ENCODE measurements at regions of chr1 and their contacts with region 1.

Region 1: DNA sequence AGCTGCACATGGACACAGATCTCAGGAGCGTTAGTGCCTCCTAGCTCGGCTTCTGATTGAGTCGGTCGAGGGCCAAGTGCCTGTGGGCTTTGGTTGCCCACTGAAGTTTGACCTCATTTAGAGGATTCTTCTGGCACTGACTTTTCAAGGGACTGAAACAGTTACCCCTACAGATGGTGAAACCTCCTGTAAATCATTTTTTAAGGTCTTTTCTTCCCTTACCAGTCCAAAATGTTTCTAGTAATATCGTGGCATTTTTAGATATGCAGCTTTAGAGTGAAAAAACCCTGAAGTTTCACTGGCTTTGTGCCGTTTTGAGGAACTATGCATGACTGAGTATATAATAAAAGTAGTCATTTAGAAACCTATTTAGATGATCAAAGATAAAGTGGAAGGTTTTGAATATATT is 34.7 kb upstream of the L1TD1 start:
- DNase-seq: no peak
- H3K4me3 ChIP-seq: no peak overlapping the region
- H3K27ac ChIP-seq: no peak overlapping the region
- H3K4me1 ChIP-seq: no peaks in the 10 kb centered on the region
- H3K27me3 ChIP-seq: no peaks in the 10 kb centered on the region
- CTCF ChIP-seq: no peak
- EP300 ChIP-seq: no peak
- POLR2A ChIP-seq: no peak

Region 2: DNA sequence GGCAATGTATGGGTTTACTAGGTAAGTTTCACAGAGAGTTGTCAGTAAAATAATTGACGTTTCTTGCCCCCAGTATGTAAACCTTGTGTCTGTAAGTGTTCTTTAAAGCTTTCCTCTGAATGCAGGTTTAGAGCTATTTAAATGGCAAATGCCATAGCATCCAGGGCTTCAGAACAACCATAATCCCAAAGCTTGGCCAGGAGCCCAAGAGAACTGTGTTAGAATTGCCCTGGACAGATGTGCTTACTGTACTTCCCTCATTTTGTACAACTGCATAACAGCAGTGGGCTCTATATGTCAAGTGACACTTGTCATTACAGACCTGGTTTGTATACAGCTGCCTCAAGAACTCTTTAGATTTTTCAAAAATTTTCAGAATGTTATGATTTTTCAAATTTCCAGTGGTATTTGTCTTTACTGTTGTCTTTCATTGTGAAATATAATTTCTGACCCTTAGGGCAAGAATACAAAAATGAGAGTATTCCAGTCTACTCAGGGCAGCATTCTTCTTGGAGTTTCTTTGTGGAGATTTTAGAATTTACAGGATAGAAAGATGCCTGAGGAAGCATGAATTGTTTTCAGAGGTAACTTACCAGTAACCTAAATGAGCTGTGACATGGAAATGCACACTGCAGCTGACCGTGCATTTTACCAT is 102.2 kb before region 1 on chr1:
- intact Hi-C with region 1: no loop called
- DNase-seq: no peak
- H3K4me3 ChIP-seq: no peak overlapping the region
- H3K27ac ChIP-seq: no peak overlapping the region
- H3K4me1 ChIP-seq: no peaks in the 10 kb centered on the region
- H3K27me3 ChIP-seq: no peaks in the 10 kb centered on the region
- CTCF ChIP-seq: no peak
- EP300 ChIP-seq: no peak
- POLR2A ChIP-seq: no peak

Region 3: DNA sequence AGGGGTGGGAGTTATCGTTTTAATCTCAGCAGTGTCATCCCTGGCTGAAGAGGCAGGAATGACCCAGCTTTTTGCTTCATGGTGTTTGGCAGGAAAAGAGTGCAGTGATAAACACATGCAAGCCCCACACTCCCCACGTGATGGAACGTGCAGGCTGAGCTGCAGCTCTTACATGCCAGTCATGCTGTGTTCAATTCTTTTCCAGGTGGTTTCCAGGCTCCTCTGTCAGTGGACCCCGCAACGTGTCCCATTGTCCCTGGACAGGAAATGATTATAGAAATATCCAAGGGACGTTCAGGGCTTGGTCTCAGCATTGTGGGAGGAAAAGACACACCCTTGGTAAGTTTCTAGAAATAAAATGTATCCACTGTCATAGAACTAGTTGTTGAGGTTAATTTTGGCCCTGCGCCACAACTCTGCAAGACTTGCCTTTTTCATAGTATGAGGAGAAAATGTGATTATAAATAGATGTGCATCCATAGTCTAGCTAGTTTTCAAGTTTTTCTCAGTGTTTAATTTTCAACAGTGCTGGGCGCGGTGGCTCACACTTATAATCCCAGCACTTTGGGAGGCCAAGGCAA is 75.5 kb before region 1 on chr1:
- intact Hi-C with region 1: no loop called
- DNase-seq: peak in 1 of 2 donors; percentile 47
- H3K4me3 ChIP-seq: no peak overlapping the region
- H3K27ac ChIP-seq: no peak overlapping the region
- H3K4me1 ChIP-seq: peaks cover 0 to 4% (median 0%) of the 10 kb centered on the region in 4 donors
- H3K27me3 ChIP-seq: no peaks in the 10 kb centered on the region
- CTCF ChIP-seq: no peak
- EP300 ChIP-seq: no peak
- POLR2A ChIP-seq: no peak

Region 4: DNA sequence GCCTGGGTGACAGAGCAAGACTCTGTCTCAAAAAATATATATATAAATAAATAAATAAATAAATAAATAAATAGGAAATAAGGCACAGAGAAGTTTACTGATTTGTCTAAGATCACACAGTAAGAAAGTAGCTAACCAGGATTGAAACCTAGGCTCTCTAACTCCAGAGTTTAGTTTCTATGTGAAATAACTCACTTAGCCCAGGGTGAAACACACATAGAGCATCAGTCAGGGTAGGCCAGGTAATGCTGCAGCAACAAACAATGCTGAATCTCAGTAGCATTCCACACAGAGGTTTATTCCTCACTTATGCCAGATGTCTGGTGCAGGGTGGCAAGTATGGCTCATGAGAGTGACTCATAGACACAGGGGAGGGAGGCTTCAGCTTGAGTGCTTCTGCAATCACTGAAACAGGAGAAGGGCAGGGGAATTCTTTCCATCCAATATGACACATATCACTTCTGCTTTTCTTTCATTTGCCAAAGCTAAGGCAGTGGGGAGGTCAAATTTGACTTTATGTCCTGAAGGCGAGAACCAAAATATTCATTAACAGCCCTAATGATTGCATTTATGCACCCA is 196.4 kb after region 1 on chr1:
- intact Hi-C with region 1: no loop called
- DNase-seq: no peak
- H3K4me3 ChIP-seq: no peak overlapping the region
- H3K27ac ChIP-seq: no peak overlapping the region
- H3K4me1 ChIP-seq: no peaks in the 10 kb centered on the region
- H3K27me3 ChIP-seq: no peaks in the 10 kb centered on the region
- CTCF ChIP-seq: no peak
- EP300 ChIP-seq: no peak
- POLR2A ChIP-seq: no peak

Region 5: DNA sequence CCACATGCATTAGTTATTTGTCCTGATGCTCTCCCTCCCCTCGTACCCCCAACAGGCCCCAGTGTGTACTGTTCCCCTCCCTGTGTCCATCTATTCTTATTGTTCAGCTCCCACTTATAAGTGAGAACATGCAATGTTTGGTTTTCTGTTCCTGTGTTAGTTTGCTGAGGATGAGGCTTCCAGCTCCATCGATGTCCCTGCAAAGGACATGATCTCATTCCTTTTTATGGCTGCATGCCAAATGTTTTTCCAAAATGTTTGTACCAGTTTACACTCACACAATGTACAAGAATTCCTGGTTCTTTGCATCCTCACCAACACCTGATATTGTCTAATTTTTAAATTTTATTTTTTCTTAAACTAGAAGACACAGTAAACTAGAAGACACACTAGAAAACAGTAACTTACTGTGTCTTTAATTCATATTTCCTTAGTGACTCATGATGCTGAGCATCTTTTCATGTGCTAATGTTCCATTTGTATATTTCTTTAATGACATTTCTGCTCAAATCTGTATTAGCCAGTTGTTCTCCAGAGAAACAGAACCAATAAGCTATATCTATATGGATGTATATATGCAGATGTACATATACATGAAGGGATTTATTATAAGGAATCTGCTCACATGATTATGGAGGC is 257.5 kb after region 1 on chr1:
- intact Hi-C with region 1: loop called (anchors 5 kb)
- DNase-seq: no peak
- H3K4me3 ChIP-seq: no peak overlapping the region
- H3K27ac ChIP-seq: no peak overlapping the region
- H3K4me1 ChIP-seq: no peaks in the 10 kb centered on the region
- H3K27me3 ChIP-seq: no peaks in the 10 kb centered on the region
- CTCF ChIP-seq: no peak
- EP300 ChIP-seq: no peak
- POLR2A ChIP-seq: no peak

Measured in stomach (tissue), 19 donors.